Sciatic nerve (tissue), 2 donors: ENCODE measurements at regions of chr13 and their contacts with region 1.

Region 1: DNA sequence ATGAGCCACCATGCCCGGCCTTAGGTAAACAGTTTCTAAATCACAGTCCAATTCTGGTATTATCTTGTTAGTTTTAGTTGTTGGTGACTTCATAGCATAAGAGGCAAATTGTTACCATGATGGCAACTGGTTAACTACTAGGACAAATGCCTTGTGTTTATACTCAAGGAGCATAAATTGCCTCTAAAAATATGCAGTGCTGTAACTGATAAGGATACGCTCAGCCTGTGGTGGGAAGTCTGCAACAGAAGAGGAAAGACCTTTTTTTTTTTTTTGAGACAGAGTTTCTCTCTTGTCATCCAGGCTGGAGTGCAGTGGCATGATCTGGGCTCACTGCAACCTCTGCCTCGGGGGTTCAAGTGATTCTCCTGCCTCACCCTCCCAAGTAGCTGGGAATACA is 311.9 kb upstream of the ARGLU1 start:
- DNase-seq: no peak
- ATAC-seq: no peak

Region 2: GRCh38 chr13:105389373-105389772 is 1490.4 kb before region 1 on chr13:
- intact Hi-C with region 1: no loop called
- DNase-seq: no peak
- ATAC-seq: no peak

Region 3: GRCh38 chr13:106619688-106620555 is 259.9 kb before region 1 on chr13:
- intact Hi-C with region 1: no loop called
- DNase-seq: peak; percentile 60
- ATAC-seq: peak; percentile 93

Region 4: DNA sequence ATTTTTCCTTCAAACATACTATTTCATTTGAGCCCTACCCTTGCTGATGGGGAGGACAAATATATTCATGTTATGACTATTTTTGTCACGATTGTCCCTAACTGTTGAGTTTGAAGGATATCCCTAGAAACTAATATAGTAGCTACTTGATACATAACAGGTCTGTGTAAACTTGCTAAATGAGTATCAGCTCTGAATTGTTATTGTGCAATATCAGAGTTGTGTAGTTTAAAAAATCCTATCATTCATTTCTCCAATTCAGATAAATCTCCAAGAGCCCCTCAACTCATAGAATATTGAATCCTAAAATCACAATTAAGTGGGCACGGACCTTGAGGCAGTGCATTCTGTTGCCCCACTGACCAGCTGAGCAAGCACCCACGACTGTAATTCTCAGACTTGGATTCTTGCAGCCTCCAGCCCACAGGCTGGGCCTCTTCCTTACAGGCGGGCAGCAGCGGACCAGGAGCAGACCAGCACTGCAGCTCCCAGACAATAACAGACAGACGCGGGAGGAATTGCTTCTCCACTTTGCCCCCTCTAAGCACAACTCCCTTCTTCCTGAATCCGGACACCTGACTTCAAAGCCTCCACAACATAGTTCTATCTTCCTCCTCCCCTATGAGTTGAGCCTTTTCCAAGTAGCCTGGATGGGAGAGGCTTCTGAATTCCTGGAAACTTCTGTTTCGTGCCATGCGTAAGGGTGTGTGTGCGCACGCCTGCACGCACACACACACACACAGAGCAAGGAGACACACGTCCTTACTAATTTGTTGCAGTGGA is 25.8 kb after region 1 on chr13:
- intact Hi-C with region 1: loop called (anchors 2 kb)
- DNase-seq: no peak
- ATAC-seq: peak; percentile 74

Region 5: DNA sequence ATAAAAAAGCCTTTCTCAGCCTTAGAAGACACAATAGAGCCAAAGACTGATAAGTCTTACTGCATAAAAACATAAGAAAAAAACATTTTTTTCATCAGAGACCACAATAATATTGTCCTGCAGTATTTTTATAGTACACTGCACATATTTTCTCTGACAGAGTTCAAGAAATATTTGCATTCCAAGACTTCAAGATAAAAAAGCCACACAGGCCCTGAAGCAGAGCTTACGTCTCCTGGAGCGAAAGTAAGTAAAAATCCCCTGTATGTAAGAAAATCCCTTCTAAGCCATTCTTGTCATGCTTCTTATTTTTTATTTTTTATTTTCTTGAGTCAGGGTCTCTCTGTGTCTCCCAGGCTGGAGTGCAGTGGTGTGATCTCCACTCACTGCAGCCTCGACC is 579.6 kb after region 1 on chr13:
- intact Hi-C with region 1: no loop called
- DNase-seq: no peak
- ATAC-seq: no peak